Activated CD4-positive, alpha-beta memory T cell treated with anti-CD3 and anti-CD28 coated beads for 36 hours (primary cell): ENCODE measurements at regions of chr22 and their contacts with region 1.

Region 1: DNA sequence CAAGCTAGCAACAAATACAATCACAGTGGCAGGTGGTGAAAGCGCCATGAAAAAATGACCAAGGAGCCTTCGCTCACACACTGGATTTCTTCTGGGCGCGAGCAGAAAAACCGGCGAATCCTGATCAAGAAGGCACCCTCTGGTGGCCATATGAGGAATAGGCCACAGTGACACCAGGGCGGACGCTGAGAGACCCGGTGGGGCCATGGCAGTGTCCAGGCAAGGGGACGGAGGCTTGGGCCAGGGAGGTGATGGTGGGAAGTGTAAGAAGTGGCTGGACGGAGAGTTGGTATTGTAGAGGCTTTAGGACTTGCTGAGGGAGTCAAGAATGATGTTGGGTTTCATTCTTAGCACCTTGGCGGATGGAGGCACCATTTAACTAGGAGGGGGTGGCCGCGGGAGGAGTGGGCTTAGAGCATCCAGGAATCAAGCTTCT is 16.9 kb upstream of the RAC2 start:
- DNase-seq: peak; percentile 76
- H3K4me3 Mint-ChIP-seq: peak overlapping the region; percentile 17
- H3K27ac Mint-ChIP-seq: peak overlapping the region; percentile 65
- H3K4me1 Mint-ChIP-seq: peaks cover 20% of the 10 kb centered on the region
- H3K27me3 Mint-ChIP-seq: no peaks in the 10 kb centered on the region

Region 2: DNA sequence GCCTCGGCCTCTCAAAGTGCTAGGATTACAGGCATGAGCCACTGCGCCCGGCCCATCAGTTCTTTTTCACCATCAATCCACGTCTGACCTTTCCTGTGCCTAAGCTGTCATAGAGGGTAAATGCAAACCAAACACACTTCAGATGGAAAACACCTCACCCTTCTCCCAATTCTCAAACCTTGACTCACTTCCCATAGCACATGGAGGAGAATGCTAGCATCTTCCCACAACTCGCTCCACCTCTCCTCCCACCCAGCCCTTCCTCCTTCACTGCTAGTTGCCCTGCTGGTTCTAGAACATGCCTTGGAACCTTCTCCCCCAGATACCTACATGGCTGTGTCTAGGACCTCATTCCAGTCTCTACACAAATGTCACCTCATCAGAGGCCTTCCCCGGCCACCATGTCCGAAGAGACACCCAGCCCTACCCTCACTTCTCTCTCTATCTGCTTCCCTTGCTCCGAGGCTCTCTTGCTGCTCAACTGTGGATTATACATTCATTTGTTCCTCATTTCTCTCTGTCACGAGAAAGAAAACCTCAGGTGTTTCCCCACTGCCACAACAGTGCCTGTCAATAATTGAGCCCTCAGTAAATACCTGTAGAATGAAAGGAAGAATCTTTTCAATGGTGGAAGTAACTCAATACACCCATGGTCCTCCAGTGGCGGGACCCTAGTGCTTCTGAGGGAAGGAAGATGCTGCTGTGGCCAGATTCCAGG is 421.4 kb before region 1 on chr22:
- CTCF ChIA-PET with region 1: no interaction called
- POLR2A ChIA-PET with region 1: no interaction called
- intact Hi-C with region 1: no loop called
- DNase-seq: no peak
- H3K4me3 Mint-ChIP-seq: no peak overlapping the region
- H3K27ac Mint-ChIP-seq: no peak overlapping the region
- H3K4me1 Mint-ChIP-seq: no peaks in the 10 kb centered on the region
- H3K27me3 Mint-ChIP-seq: peaks cover 18% of the 10 kb centered on the region

Region 3: GRCh38 chr22:36986242-36986821 is 274.6 kb before region 1 on chr22:
- CTCF ChIA-PET with region 1: interaction called, 10 read pairs
- POLR2A ChIA-PET with region 1: no interaction called
- intact Hi-C with region 1: loop called (anchors 5 kb)
- DNase-seq: peak; percentile 80
- H3K4me3 Mint-ChIP-seq: no peak overlapping the region
- H3K27ac Mint-ChIP-seq: no peak overlapping the region
- H3K4me1 Mint-ChIP-seq: peaks cover 14% of the 10 kb centered on the region
- H3K27me3 Mint-ChIP-seq: peaks cover 20% of the 10 kb centered on the region

Region 4: GRCh38 chr22:37229805-37230672 is 30.9 kb before region 1 on chr22:
- CTCF ChIA-PET with region 1: interaction called, 22 read pairs
- POLR2A ChIA-PET with region 1: no interaction called
- intact Hi-C with region 1: loop called (anchors 2 kb)
- DNase-seq: peak; percentile 97
- H3K4me3 Mint-ChIP-seq: peak overlapping the region; percentile 67
- H3K27ac Mint-ChIP-seq: peak overlapping the region; percentile 98
- H3K4me1 Mint-ChIP-seq: peaks cover 90% of the 10 kb centered on the region
- H3K27me3 Mint-ChIP-seq: no peaks in the 10 kb centered on the region

Region 5: GRCh38 chr22:37282385-37282677 is 21.4 kb after region 1 on chr22 and contains the start of gene CYTH4:
- CTCF ChIA-PET with region 1: interaction called, 15 read pairs
- POLR2A ChIA-PET with region 1: no interaction called
- intact Hi-C with region 1: loop called (anchors 2 kb)
- DNase-seq: peak; percentile 89
- H3K4me3 Mint-ChIP-seq: peak within 1 kb of the TSS; percentile 82
- H3K27ac Mint-ChIP-seq: peak within 1 kb of the TSS; percentile 94
- H3K4me1 Mint-ChIP-seq: peaks cover 48% of the 10 kb centered on the region
- H3K27me3 Mint-ChIP-seq: peaks cover 2% of the 10 kb centered on the region
- total RNA-seq, gene CYTH4: 58.7 to 60.5 TPM

Region 6: DNA sequence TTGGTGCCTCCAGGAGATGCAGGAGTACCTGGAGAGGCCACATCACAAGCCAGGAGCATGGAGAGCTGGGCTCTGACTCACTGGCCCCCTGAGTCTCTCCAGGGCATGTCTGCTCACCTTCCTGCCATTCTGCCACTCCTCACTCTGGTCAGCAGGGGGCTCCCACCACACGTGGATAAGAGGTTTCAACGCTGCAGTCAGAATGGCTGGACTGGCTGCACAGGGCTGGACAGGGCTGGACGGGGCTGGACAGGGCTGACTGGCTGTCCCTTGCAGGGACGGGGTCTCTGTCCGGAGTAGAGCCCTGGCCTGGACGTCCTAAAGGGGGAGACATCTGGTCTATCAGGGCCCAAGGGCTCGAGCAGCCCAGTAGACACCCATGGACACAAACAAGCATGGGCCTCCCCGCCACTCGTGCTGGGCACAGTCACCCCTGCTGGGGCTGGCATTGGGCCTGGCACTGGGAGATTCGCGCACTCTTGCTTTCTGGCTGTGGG is 56.0 kb after region 1 on chr22:
- CTCF ChIA-PET with region 1: interaction called, 15 read pairs
- POLR2A ChIA-PET with region 1: no interaction called
- intact Hi-C with region 1: no loop called
- DNase-seq: peak; percentile 83
- H3K4me3 Mint-ChIP-seq: no peak overlapping the region
- H3K27ac Mint-ChIP-seq: no peak overlapping the region
- H3K4me1 Mint-ChIP-seq: peaks cover 29% of the 10 kb centered on the region
- H3K27me3 Mint-ChIP-seq: no peaks in the 10 kb centered on the region

Region 7: DNA sequence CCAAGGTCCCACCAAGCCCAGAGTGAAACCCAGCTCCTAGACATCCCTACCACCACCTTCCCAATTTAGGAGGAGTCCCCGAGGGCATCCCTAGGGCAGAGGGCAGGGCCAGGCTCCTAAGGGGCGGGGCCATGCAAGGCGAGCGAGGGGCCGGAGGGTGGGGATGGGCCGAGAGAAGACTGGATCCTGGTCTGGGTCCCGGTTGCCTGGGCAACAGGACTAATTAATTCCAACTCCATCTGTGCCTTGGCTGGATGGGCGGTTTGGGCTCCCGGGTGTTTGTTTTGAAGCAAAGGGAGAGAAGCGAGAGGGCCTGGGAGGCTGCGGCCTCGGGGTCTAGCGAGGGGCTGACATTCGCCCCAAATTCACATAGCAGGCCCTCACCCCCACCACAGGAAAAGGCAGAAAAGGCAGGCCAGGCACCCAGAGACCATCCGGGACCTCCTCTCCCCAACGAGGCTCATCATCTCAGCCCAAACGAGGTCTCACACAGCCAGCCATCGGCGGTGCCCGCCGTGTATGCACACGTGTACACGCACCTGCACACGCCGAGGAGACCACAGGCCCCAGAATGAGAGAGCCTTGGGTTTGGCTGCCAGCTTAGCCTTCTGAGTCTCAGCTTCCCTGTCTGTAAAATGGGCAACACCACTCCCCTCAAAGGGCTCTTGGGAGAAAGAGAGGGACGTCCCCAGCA is 142.5 kb after region 1 on chr22:
- CTCF ChIA-PET with region 1: no interaction called
- POLR2A ChIA-PET with region 1: no interaction called
- intact Hi-C with region 1: no loop called
- DNase-seq: no peak
- H3K4me3 Mint-ChIP-seq: no peak overlapping the region
- H3K27ac Mint-ChIP-seq: no peak overlapping the region
- H3K4me1 Mint-ChIP-seq: no peaks in the 10 kb centered on the region
- H3K27me3 Mint-ChIP-seq: no peaks in the 10 kb centered on the region

Region 8: GRCh38 chr22:37467391-37467955 is 206.6 kb after region 1 on chr22:
- CTCF ChIA-PET with region 1: no interaction called
- POLR2A ChIA-PET with region 1: no interaction called
- intact Hi-C with region 1: no loop called
- DNase-seq: no peak
- H3K4me3 Mint-ChIP-seq: no peak overlapping the region
- H3K27ac Mint-ChIP-seq: no peak overlapping the region
- H3K4me1 Mint-ChIP-seq: peaks cover 9% of the 10 kb centered on the region
- H3K27me3 Mint-ChIP-seq: no peaks in the 10 kb centered on the region

Region 9: GRCh38 chr22:37566903-37567820 is 306.2 kb after region 1 on chr22:
- CTCF ChIA-PET with region 1: interaction called, 11 read pairs
- POLR2A ChIA-PET with region 1: no interaction called
- intact Hi-C with region 1: no loop called
- DNase-seq: peak; percentile 96
- H3K4me3 Mint-ChIP-seq: peak overlapping the region; percentile 35
- H3K27ac Mint-ChIP-seq: peak overlapping the region; percentile 81
- H3K4me1 Mint-ChIP-seq: peaks cover 27% of the 10 kb centered on the region
- H3K27me3 Mint-ChIP-seq: peaks cover 24% of the 10 kb centered on the region